H1 (cell line): ENCODE measurements at regions of chr17 and their contacts with region 1.

Region 1: DNA sequence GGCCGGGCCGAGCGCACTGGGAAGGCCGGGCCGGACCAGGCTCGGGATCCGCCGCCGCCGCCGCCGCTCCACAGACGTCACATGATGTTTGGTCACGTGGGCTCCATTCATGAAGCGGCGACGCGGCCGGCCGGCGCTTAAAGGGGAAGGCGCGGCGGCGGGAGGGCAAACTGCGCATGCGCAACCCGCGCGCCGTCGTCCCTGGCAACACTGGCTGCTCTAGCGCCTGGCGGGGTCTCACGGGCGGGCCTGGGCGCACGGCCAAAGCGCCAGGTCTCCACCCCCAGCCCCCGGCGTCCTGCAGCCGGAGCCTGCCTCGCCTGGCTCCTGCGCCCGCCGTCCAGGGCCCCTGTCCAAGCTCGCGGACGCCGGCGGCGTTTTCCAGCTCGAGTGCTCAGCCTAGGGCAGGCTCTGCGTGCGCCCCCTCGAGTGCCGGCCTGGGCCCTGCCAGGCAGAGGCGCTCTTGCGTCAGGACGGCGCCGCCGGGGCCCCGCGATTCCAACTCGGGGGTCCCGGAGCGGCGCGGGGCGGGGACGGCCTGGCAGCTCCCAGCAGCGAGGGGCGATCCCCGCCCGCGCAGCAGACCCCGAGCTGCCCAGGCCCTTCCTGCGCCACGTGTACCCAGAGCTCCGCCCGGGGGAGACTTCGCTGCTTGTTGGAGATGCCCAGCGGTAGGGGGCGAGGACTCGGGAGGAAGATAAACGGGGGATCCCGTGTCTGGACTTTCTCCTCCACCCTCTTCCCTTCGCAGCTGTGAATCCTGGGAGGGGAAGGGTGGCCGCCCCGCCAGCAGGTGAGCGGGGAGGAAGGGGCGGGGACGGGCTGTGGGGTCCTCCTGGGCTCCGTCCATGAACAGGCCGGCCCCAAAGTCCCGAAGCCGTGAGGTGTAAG is at the start of gene MAFG:
- DNase-seq: peak; percentile 70 to 95
- H3K4me3 ChIP-seq: peak within 1 kb of the TSS; percentile 67 to 89 (median 70)
- H3K27ac ChIP-seq: peak within 1 kb of the TSS; percentile 72
- H3K4me1 ChIP-seq: peaks cover 0 to 37% (median 28%) of the 10 kb centered on the region in 4 experiments; a peak in 6 of 7 replicates
- H3K27me3 ChIP-seq: peaks cover 0 to 12% (median 9%) of the 10 kb centered on the region in 4 experiments; a peak in 4 of 7 replicates
- CTCF ChIP-seq: peak; percentile 60 to 65 (median 63)
- EP300 ChIP-seq: peak in 1 of 2 experiments; percentile 22; a peak in 1 of 3 replicates
- POLR2A ChIP-seq: no peak
- RAD21 ChIP-seq: peak; percentile 42 to 69
- total RNA-seq, gene MAFG: 26.9 and 27.7 TPM in 2 replicates

Region 2: DNA sequence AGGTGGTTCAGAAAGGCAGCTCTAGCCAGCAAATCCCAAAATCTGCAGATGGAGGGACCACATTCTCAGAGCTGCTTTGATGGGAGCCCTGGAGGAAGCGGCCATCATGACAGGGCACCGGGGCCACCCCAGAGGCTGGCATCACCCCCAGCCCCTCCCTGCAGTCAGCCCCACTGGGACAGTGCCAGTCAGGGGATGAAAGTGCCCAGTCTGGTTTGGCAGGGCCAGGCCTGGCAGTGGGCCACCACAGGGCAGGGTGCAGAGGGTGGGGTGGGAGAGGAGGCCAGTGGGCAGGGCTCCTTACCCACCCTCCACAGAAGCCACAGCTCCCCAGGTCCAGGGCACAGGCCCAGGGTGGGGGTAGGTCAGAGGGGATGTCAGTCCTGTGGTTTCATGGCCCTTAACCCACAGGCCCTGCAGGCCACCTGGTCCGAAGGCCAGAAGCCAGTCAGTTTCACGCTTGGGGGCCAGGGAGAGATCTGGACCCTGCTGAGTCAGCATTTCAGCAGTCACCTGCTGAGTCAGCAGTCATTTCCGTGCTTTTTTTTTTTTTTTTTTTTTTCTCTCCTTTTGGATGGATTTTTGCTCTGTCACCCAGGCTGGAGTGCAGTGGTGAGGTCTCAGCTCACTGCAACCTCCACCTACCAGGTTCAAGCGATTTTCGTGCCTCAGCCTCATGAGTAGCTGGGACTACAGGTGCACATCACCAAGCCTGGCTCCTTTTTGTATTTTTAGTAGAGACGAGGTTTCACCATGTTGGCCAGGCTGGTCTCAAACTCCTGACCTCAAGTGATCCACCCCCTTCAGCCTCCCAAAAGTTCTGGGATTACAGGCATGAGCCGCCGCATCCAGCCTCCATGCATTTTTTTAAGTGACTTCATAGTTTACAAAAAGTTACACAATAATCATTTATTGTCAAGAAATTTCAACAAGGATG is 205.4 kb before region 1 on chr17:
- CTCF ChIA-PET with region 1: no interaction called
- POLR2A ChIA-PET with region 1: no interaction called
- DNase-seq: peak in 1 of 2 experiments; percentile 52
- H3K4me3 ChIP-seq: no peak overlapping the region
- H3K27ac ChIP-seq: no peak overlapping the region
- H3K4me1 ChIP-seq: peaks cover 0 to 10% (median 3%) of the 10 kb centered on the region in 4 experiments; a peak in 5 of 7 replicates
- H3K27me3 ChIP-seq: no peaks in the 10 kb centered on the region
- CTCF ChIP-seq: no peak
- EP300 ChIP-seq: no peak
- POLR2A ChIP-seq: no peak
- RAD21 ChIP-seq: no peak

Region 3: DNA sequence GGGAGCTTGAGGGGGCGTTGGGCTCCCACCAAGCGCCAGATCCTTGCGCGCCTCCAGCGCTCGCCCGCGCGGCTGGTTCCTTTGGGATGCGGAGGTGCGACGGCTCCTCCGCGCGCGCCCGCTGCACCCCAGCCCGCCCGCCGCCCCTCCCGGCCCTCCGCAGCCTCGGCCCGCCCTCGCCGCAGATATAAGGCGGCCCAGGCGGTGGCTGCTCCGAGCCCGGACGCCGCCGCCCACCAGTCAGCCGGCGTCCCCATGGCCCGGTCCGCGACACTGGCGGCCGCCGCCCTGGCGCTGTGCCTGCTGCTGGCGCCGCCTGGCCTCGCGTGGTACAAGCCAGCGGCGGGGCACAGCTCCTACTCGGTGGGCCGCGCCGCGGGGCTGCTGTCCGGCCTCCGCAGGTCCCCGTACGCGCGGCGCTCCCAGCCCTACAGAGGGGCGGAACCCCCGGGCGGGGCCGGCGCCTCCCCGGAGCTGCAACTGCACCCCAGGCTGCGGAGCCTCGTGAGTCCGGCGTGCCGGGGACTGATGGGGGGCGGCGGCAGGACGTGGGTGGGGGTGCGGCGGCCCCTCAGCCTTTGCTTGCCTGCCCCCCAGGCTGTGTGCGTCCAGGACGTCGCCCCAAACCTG is 25.8 kb before region 1 on chr17 and contains the start of gene NPB:
- CTCF ChIA-PET with region 1: interaction called, 4 read pairs
- POLR2A ChIA-PET with region 1: interaction called, 13 read pairs
- DNase-seq: peak in 1 of 2 experiments; percentile 75
- H3K4me3 ChIP-seq: peak within 1 kb of the TSS; percentile 19 to 61 (median 44)
- H3K27ac ChIP-seq: no peak within 1 kb of the TSS
- H3K4me1 ChIP-seq: peaks cover 0 to 8% (median 2%) of the 10 kb centered on the region in 4 experiments; a peak in 3 of 7 replicates
- H3K27me3 ChIP-seq: peaks cover 0 to 22% (median 14%) of the 10 kb centered on the region in 4 experiments; a peak in 5 of 7 replicates
- CTCF ChIP-seq: no peak
- EP300 ChIP-seq: no peak
- POLR2A ChIP-seq: 0 out of 3 replicates have a peak, but pooled peaks of 1 of the 2 experiments have one; percentile 26
- RAD21 ChIP-seq: no peak
- total RNA-seq, gene NPB: 0.80 and 1.5 TPM in 2 replicates

Region 4: GRCh38 chr17:81911277-81911961 is 16.5 kb before region 1 on chr17 and contains the start of gene PCYT2:
- CTCF ChIA-PET with region 1: interaction called, 12 read pairs
- POLR2A ChIA-PET with region 1: interaction called, 135 read pairs
- DNase-seq: peak in 1 of 2 experiments; percentile 93
- H3K4me3 ChIP-seq: peak within 1 kb of the TSS; percentile 45 to 88 (median 70)
- H3K27ac ChIP-seq: no peak within 1 kb of the TSS
- H3K4me1 ChIP-seq: peaks cover 0 to 10% (median 5%) of the 10 kb centered on the region in 4 experiments; a peak in 3 of 7 replicates
- H3K27me3 ChIP-seq: peaks cover 0 to 4% (median 2%) of the 10 kb centered on the region in 4 experiments; a peak in 2 of 7 replicates
- CTCF ChIP-seq: peak in 1 of 3 experiments; percentile 13; a peak in 1 of 4 replicates
- EP300 ChIP-seq: no peak
- POLR2A ChIP-seq: no peak
- RAD21 ChIP-seq: no peak
- total RNA-seq, gene PCYT2: 29.9 and 31.0 TPM in 2 replicates

Region 5: GRCh38 chr17:81917565-81918332 is 10.1 kb before region 1 on chr17 and contains the start of gene SIRT7:
- CTCF ChIA-PET with region 1: interaction called, 12 read pairs
- POLR2A ChIA-PET with region 1: interaction called, 150 read pairs
- DNase-seq: peak in 1 of 2 experiments; percentile 83
- H3K4me3 ChIP-seq: peak within 1 kb of the TSS; percentile 64 to 90 (median 75)
- H3K27ac ChIP-seq: peak within 1 kb of the TSS; percentile 18; the same call in 1 of the 2 replicates
- H3K4me1 ChIP-seq: peaks cover 0 to 13% (median 5%) of the 10 kb centered on the region in 4 experiments; a peak in 6 of 7 replicates
- H3K27me3 ChIP-seq: no peaks in the 10 kb centered on the region
- CTCF ChIP-seq: no peak
- EP300 ChIP-seq: no peak
- POLR2A ChIP-seq: peak in 1 of 2 experiments; percentile 59; a peak in 1 of 3 replicates
- RAD21 ChIP-seq: no peak
- total RNA-seq, gene SIRT7: 16.6 and 18.7 TPM in 2 replicates

Region 6: GRCh38 chr17:81941790-81942553 is 14.1 kb after region 1 on chr17:
- CTCF ChIA-PET with region 1: interaction called, 16 read pairs
- POLR2A ChIA-PET with region 1: interaction called, 150 read pairs
- DNase-seq: no peak
- H3K4me3 ChIP-seq: peak overlapping the region in 1 of 4 experiments; percentile 39; a peak in 2 of 8 replicates
- H3K27ac ChIP-seq: no peak overlapping the region
- H3K4me1 ChIP-seq: peaks cover 0 to 12% (median 7%) of the 10 kb centered on the region in 4 experiments; a peak in 5 of 7 replicates
- H3K27me3 ChIP-seq: peaks cover 0 to 5% (median 0%) of the 10 kb centered on the region in 4 experiments; a peak in 3 of 7 replicates
- CTCF ChIP-seq: no peak
- EP300 ChIP-seq: no peak
- POLR2A ChIP-seq: no peak
- RAD21 ChIP-seq: no peak

Region 7: DNA sequence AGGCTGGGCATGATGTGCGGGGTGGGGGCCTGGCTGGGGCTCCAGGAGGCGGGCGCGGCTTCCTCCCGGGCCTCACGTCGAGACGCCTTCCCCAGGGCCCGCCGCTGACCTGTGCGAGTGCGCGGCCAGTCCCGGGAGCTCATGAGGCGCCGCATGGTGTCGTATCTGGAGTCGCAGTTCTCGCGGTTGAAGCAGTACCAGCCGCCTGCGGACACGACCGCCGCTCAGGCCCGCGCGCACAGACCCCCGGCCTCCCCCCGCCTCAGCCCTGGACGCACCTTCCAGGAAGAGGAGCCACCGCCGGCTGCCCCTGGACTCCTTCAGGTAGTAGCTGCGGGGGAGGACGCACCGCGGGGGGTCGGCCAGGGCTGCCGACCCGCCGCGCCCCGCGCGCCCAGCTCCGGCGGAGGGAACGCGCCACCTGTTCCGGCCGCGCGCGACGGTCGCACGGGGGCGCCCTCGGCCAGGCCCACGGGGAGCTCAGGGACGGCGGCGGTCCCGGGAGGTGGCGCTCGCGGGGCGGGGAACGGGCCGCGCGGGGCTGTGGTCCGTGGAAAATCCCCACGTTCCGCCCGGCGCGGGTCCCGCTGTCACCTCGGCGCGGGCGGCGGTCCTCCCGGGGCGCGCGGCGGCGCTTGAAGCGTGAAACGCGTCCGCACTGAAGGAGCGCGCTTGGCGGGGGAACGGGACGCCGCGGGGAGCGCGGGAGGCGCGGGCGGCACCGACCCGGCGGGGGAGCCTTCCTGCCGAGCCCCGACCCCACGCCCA is 31.6 kb after region 1 on chr17:
- CTCF ChIA-PET with region 1: interaction called, 7 read pairs
- POLR2A ChIA-PET with region 1: interaction called, 10 read pairs
- DNase-seq: peak in 1 of 2 experiments; percentile 72
- H3K4me3 ChIP-seq: peak overlapping the region in 1 of 4 experiments; percentile 52; a peak in 2 of 8 replicates
- H3K27ac ChIP-seq: no peak overlapping the region
- H3K4me1 ChIP-seq: peaks cover 0 to 6% (median 1%) of the 10 kb centered on the region in 4 experiments; a peak in 4 of 7 replicates
- H3K27me3 ChIP-seq: peaks cover 46 to 80% (median 63%) of the 10 kb centered on the region in 4 experiments
- CTCF ChIP-seq: peak; percentile 51 to 98 (median 75)
- EP300 ChIP-seq: no peak
- POLR2A ChIP-seq: no peak
- RAD21 ChIP-seq: peak; percentile 26 to 68; a peak in 3 of 4 replicates

Region 8: DNA sequence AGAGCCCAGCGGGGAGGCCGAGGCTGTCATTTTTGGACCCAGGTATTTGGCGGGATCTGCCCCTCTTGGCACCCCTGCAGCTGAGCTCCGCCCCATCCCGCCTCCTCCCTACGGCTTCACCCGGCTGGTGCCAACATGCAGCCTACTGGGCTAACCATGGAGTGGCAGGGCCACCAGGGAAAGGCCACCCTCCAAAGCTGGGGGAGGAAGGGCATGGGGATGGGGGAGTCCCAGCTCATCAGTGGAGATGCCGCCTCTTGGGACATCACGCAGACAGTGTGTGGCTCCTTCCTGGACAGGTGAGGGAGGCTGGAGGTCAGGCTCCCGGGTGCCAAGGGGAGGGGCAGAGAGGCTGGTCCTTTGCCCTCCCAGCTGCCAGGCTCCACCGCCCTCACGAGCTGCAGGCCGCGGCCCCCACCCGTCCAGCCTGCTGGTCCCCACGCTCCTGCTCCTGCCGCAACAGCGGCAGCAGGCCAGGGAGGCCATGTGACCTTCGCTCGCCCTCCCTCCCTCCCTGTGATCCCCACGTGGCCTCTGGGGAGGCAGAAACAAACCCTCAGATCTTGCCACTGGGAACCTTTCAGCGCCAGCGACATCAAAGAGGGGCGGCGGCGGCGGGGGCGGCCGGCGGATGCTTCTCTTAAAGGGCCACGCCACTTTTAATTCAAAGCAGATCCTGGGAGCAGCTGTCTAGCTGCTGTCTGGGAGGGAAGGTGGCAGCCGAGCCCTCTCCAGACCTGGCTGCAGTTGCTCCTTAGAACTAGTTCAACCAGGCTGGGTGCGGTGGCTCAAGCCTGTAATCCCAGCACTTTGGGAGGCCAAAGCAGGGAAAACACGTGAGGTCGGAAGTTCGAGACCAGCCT is 39.9 kb after region 1 on chr17:
- CTCF ChIA-PET with region 1: interaction called, 5 read pairs
- POLR2A ChIA-PET with region 1: interaction called, 19 read pairs
- DNase-seq: peak; percentile 43 to 81
- H3K4me3 ChIP-seq: peak overlapping the region in 1 of 4 experiments; percentile 40; a peak in 1 of 8 replicates
- H3K27ac ChIP-seq: no peak overlapping the region
- H3K4me1 ChIP-seq: peaks cover 0 to 19% (median 16%) of the 10 kb centered on the region in 4 experiments; a peak in 6 of 7 replicates
- H3K27me3 ChIP-seq: peaks cover 0 to 43% (median 35%) of the 10 kb centered on the region in 4 experiments; a peak in 6 of 7 replicates
- CTCF ChIP-seq: no peak
- EP300 ChIP-seq: peak in 1 of 2 experiments; percentile 43; a peak in 1 of 3 replicates
- POLR2A ChIP-seq: no peak
- RAD21 ChIP-seq: no peak